Dorsolateral prefrontal cortex (tissue), 120 donors: ENCODE measurements at regions of chr2 and their contacts with region 1.

Region 1: GRCh38 chr2:219642465-219643080 is 15.1 kb downstream of the SLC4A3 start:
- DNase-seq: peak; percentile 89 to 98 (median 96)
- H3K4me3 ChIP-seq: peak overlapping the region in 6 of 59 donors; percentile 9 to 25 (median 12)
- H3K27ac ChIP-seq: peak overlapping the region in 15 of 59 donors; percentile 5 to 63 (median 38)
- H3K27me3 ChIP-seq: peaks cover 0 to under 1% (median 0%) of the 10 kb centered on the region in 45 donors
- CTCF ChIP-seq: peak; percentile 77 to 99 (median 97)

Region 2: DNA sequence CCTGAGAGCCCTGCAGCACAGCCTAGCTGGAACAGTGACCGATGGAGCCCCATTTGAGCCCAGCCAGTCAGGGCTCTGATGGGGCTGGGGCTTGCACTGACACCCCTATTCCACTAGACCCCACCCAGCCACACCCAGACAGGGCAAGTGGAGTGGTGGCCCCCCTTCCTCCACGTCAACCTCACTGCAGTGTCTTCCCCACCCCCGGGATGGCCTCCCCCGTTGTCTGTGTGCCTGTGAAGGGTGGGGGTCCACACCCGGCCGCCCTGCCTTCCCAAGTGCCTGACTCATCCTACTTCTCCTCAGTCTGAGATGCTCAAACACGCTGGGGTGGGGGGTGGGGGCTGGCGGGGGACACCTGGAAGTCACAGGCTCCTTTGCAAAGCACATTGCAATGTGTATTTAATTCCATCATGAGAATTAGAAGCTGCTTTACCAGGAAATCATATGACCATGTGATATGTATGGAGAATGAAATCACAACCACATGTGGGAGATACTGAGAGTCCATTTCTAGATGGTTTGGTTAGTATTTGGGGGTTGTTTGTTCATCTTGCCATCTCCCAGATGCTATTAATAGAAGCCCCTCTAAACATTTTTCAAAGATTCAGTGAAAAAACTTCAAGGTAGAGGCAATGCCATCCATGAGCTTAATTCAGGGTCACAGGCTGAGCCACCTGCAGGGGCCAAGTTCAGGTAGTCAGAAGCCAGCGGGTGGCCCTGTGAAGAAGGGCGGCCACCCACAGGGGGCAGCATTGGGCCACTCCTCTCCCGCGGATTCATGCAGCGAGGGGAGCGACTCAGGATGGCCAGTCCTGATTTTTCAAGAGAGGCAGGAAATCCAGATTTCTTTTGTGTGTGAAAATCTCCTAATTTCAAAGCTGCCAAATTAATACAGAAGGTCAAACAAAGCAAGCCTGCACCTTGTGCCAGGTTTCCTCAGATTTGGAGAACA is 166.6 kb before region 1 on chr2:
- intact Hi-C with region 1: loop called in 1 of 2 experiments (anchors 5 kb)
- DNase-seq: peak in 8 of 10 donors; percentile 51 to 80 (median 64)
- H3K4me3 ChIP-seq: no peak overlapping the region
- H3K27ac ChIP-seq: no peak overlapping the region
- H3K27me3 ChIP-seq: no peaks in the 10 kb centered on the region
- CTCF ChIP-seq: peak; percentile 35 to 89 (median 80)

Region 3: DNA sequence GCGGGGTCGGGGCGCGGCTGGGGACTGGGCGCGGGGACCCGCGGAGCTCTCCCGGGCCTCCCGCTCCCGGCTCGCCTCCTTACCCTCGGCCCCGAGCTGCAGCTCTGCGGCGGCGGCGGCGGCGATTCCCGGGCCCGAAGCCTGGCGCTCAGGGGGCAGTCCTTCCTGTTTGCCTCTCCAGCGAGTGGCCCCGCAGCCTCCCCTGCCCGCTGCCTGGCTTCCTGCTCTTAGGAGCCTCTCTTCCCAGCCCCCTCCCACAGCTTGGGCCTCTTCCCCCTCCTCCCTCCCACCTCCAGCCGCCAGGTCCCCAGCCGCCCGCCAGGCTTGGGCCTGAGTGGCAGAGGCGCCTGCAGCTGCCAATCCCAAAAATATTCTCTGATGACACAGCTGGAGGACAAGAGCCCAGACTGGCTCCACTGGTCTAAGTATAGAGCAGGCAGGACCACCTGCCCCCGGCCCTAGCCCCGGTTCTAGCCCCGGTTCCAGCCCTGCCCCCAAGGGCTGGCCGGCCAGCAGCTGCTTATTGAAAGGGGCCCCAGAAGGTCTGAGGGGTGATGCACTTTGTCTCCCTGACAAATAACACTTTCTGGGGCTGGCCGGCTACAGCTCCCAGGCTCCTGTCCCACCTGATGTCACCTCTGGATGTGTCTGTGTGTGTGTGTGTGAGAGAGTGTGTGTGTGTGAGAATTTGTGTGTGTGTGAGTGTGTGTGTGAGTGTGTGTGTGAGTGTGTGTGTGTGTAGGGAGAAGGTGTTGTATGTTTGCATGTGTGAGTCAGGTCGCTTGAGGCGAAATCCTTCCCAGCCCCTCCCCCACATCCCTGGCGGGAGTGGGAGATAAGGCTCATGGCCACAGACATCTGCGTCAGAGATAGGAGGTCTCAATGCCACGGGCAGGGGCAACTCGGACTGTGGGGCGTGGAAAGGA is 71.0 kb before region 1 on chr2 and contains the start of gene OBSL1:
- intact Hi-C with region 1: no loop called
- DNase-seq: peak in 7 of 10 donors; percentile 46 to 75 (median 64)
- H3K4me3 ChIP-seq: peak within 1 kb of the TSS; percentile 38 to 86 (median 67)
- H3K27ac ChIP-seq: peak within 1 kb of the TSS in 55 of 59 donors; percentile 3 to 92 (median 79)
- H3K27me3 ChIP-seq: peaks cover 0 to 29% (median 0%) of the 10 kb centered on the region in 45 donors
- CTCF ChIP-seq: no peak
- total RNA-seq, gene OBSL1: 54.9 to 144 (median 98.1) TPM